ENCODE measurements at regions of chr1 and their contacts with region 1.

Region 1: GRCh38 chr1:24391882-24392603 is 21.5 kb downstream of the STPG1 start:
- DNase-seq: peak; percentile 59 to 63
- ATAC-seq: peak; percentile 85 to 91
- H3K4me3 ChIP-seq: no peak overlapping the region
- H3K27ac ChIP-seq: peak overlapping the region; percentile 56 to 81; a peak in 5 of 6 replicates
- H3K4me1 ChIP-seq: peaks cover 55% of the 10 kb centered on the region
- CTCF ChIP-seq: peak; percentile 76
- EP300 ChIP-seq: no peak
- POLR2A ChIP-seq: no peak
- RAD21 ChIP-seq: peak; percentile 85 to 89

Region 2: GRCh38 chr1:24150234-24151174 is 241.5 kb before region 1 on chr1:
- CTCF ChIA-PET with region 1: interaction called, 88 read pairs
- POLR2A ChIA-PET with region 1: interaction called, 6 read pairs
- DNase-seq: peak; percentile 76 to 89
- ATAC-seq: peak; percentile 95 to 98
- H3K4me3 ChIP-seq: peak overlapping the region; percentile 34
- H3K27ac ChIP-seq: peak overlapping the region; percentile 65 to 83
- H3K4me1 ChIP-seq: peaks cover 12% of the 10 kb centered on the region
- CTCF ChIP-seq: peak; percentile 64
- EP300 ChIP-seq: no peak
- POLR2A ChIP-seq: no peak
- RAD21 ChIP-seq: peak; percentile 58 to 65

Region 3: DNA sequence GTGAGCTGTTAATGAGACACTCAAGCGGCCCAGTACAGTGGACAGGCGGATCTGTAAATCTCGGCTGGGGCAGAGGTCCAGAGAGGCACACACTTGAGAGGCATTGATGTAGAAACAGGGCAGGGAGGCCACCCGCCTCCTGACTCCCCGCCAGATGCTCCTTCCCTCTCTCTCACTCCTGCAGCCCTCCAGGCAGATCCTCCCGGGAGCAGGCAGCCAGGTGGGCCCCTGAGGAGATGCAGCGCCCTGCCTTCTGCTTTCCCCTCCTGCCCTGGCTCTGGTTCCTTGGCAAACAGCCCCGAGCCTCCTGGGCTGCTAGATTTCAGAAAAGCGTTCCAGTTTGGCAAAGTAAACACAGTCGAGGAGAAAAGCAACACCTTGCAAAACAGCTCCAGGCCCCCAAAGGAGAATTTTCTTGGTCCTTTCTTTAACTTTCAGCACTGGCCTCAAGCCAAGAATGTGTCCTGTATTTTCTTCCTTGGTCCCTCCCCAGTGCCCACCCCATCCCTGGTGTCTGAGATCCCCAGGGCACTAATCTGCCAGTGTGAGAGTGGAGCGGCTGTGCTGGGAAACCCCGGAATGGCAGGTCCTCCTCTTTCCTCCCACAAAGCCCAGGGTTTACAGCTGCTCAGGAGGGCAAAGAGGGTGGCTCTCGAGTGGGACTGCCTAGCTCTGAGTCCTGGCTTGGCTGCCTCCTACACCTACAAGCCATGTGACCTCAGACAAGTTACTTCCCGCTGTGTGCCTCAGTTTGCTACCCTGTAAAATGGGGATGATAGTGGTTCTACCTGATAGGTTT is 175.6 kb before region 1 on chr1:
- CTCF ChIA-PET with region 1: interaction called, 22 read pairs
- POLR2A ChIA-PET with region 1: no interaction called
- DNase-seq: peak in 1 of 2 experiments; percentile 19
- ATAC-seq: peak; percentile 44 to 73; a peak in 4 of 6 replicates
- H3K4me3 ChIP-seq: no peak overlapping the region
- H3K27ac ChIP-seq: peak overlapping the region; percentile 39 to 62; a peak in 3 of 6 replicates
- H3K4me1 ChIP-seq: peaks cover 13% of the 10 kb centered on the region
- CTCF ChIP-seq: no peak
- EP300 ChIP-seq: no peak
- POLR2A ChIP-seq: no peak
- RAD21 ChIP-seq: no peak

Region 4: GRCh38 chr1:24289937-24290595 is 102.0 kb before region 1 on chr1:
- CTCF ChIA-PET with region 1: interaction called, 16 read pairs
- POLR2A ChIA-PET with region 1: interaction called, 3 read pairs
- DNase-seq: peak; percentile 51 to 88
- ATAC-seq: peak; percentile 51 to 76; a peak in 5 of 6 replicates
- H3K4me3 ChIP-seq: no peak overlapping the region
- H3K27ac ChIP-seq: peak overlapping the region; percentile 68 to 86
- H3K4me1 ChIP-seq: peaks cover 58% of the 10 kb centered on the region
- CTCF ChIP-seq: no peak
- EP300 ChIP-seq: no peak
- POLR2A ChIP-seq: no peak
- RAD21 ChIP-seq: no peak

Region 5: GRCh38 chr1:24351918-24352627 is 40.0 kb before region 1 on chr1:
- CTCF ChIA-PET with region 1: interaction called, 20 read pairs
- POLR2A ChIA-PET with region 1: no interaction called
- DNase-seq: peak in 1 of 2 experiments; percentile 32
- ATAC-seq: peak; percentile 62 to 64; a peak in 5 of 6 replicates
- H3K4me3 ChIP-seq: no peak overlapping the region
- H3K27ac ChIP-seq: peak overlapping the region; percentile 15 to 69; a peak in 4 of 6 replicates
- H3K4me1 ChIP-seq: peaks cover 14% of the 10 kb centered on the region
- CTCF ChIP-seq: no peak
- EP300 ChIP-seq: no peak
- POLR2A ChIP-seq: no peak
- RAD21 ChIP-seq: no peak

Region 6: DNA sequence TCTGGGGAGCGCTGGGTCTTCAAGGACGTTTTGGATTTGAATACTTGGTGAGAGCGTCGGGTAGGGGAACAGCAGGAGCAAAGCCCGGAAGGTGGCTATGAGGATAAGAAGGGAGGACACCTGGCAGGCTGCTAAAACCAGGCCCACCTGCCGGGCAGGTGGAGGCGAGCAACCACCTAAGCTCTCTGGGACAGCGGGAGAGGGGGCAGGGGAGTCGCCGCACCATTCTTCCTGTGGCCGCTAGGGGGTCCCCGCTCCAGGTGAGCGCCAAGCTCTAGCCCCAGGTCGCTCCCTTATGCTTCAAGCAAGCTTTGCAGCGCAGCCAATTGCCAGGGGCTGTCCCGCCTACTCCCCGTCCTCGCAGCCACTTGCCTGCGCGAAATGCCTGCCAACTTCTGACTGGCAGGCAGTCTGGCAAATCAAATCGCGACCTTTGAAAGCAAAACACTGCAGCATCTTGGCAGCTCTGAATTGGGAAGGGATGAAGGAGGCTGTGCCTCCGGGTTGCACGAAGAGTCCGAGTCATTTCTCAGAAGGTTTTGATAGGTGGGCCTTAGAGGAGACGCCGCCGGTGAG is 23.4 kb after region 1 on chr1 and contains the start of gene NIPAL3:
- CTCF ChIA-PET with region 1: interaction called, 86 read pairs
- POLR2A ChIA-PET with region 1: interaction called, 4 read pairs
- DNase-seq: peak; percentile 85 to 99
- ATAC-seq: peak; percentile 91 to 94
- H3K4me3 ChIP-seq: peak within 1 kb of the TSS; percentile 67
- H3K27ac ChIP-seq: peak within 1 kb of the TSS; percentile 64 to 95
- H3K4me1 ChIP-seq: peaks cover 51% of the 10 kb centered on the region
- CTCF ChIP-seq: peak; percentile 65
- EP300 ChIP-seq: no peak
- POLR2A ChIP-seq: no peak
- RAD21 ChIP-seq: peak; percentile 48 to 61
- polyA plus RNA-seq, gene NIPAL3: 10.4 and 14.7 TPM in 2 replicates

Measured in A549 (cell line).